Esophagus squamous epithelium (tissue), 5 donors: ENCODE measurements at regions of chr4 and their contacts with region 1.

Region 1: DNA sequence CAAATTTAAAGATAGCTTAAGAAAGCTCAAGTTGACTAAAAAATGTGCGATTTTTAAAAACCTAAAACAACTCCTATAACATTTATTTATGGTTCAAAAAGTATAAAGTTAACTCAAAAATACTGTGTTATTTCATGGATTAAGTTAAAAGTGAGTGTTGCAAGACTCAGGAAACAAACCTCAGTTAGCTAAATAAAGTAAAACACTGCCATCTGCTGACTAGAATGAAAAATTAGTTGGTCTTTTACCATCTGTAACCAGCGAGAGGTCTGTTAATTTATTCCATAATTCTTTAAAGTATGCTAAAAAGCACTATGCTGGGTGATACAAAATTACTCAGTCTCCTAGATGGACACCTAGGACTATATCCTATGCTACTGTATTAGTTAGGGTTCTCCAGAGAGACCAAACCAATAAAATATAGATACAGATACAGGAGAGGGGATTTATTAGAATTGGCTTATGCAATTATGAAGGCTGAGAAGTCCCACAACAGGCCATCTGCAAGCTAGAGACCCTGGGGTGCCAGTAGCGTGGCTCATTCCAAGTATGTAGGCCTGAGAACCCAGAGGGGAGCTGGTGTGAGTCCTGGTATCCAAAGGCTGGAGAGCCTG is 4.9 kb upstream of the WDFY3 start:
- DNase-seq: no peak
- H3K4me3 ChIP-seq: no peak overlapping the region
- H3K27ac ChIP-seq: no peak overlapping the region
- H3K4me1 ChIP-seq: peaks cover 0 to 14% (median 4%) of the 10 kb centered on the region in 3 donors
- H3K27me3 ChIP-seq: no peaks in the 10 kb centered on the region
- CTCF ChIP-seq: peak; percentile 24 to 61 (median 42)
- POLR2A ChIP-seq: no peak

Region 2: GRCh38 chr4:84750253-84750959 is 221.0 kb before region 1 on chr4:
- intact Hi-C with region 1: loop called (anchors 5 kb)
- DNase-seq: no peak
- H3K4me3 ChIP-seq: no peak overlapping the region
- H3K27ac ChIP-seq: no peak overlapping the region
- H3K4me1 ChIP-seq: peaks cover 0 to 4% (median 0%) of the 10 kb centered on the region in 3 donors
- H3K27me3 ChIP-seq: no peaks in the 10 kb centered on the region
- CTCF ChIP-seq: peak; percentile 36 to 68 (median 60)
- POLR2A ChIP-seq: no peak